ENCODE measurements at regions of chr1 and their contacts with region 1.

Region 1: GRCh38 chr1:239396995-239397394 is 10.6 kb downstream of the CHRM3 start:
- DNase-seq: no peak
- ATAC-seq: no peak
- H3K4me3 ChIP-seq: no peak overlapping the region
- H3K27ac ChIP-seq: no peak overlapping the region
- H3K4me1 ChIP-seq: no peaks in the 10 kb centered on the region
- H3K27me3 ChIP-seq: peaks cover 0 to 4% (median 0%) of the 10 kb centered on the region in 3 donors
- CTCF ChIP-seq: no peak

Region 2: GRCh38 chr1:239898062-239898730 is 501.2 kb after region 1 on chr1:
- intact Hi-C with region 1: loop called in 1 of 2 experiments (anchors 5 kb)
- DNase-seq: peak; percentile 49 to 64
- ATAC-seq: peak in 3 of 4 donors; percentile 58 to 78 (median 69)
- H3K4me3 ChIP-seq: no peak overlapping the region
- H3K27ac ChIP-seq: no peak overlapping the region
- H3K4me1 ChIP-seq: no peaks in the 10 kb centered on the region
- H3K27me3 ChIP-seq: no peaks in the 10 kb centered on the region
- CTCF ChIP-seq: peak; percentile 87

Region 3: DNA sequence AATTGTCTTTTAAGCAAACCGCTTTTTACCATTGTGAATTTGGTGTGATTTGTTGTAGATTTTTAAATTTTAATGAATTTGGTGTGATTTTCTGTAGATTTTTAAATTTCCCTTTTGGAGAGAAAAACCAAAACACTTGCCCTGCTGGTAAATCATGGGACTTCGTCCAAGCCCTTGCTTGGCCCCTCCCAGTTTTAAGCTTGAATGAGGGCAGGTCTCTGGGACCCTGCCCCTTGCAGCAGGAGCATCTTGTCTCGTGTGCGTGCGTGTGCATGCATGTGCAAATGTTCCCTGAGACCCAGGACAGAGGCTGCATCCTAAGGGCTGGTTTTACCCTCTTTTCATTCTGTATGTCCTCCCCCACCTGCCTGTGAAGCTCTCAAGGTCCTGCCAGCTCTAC is 966.3 kb after region 1 on chr1:
- intact Hi-C with region 1: no loop called
- DNase-seq: no peak
- ATAC-seq: no peak
- H3K4me3 ChIP-seq: no peak overlapping the region
- H3K27ac ChIP-seq: no peak overlapping the region
- H3K4me1 ChIP-seq: no peaks in the 10 kb centered on the region
- H3K27me3 ChIP-seq: no peaks in the 10 kb centered on the region
- CTCF ChIP-seq: no peak

Measured in psoas muscle (tissue), 8 donors.